Dorsolateral prefrontal cortex (tissue), 120 donors: ENCODE measurements at regions of chr6 and their contacts with region 1.

Region 1: GRCh38 chr6:119078376-119079282 is at the start of gene FAM184A:
- DNase-seq: peak; percentile 39 to 88 (median 72)
- H3K4me3 ChIP-seq: peak within 1 kb of the TSS; percentile 58 to 90 (median 80)
- H3K27ac ChIP-seq: peak within 1 kb of the TSS in 56 of 59 donors; percentile 8 to 91 (median 71)
- H3K27me3 ChIP-seq: no peaks in the 10 kb centered on the region
- CTCF ChIP-seq: peak in 39 of 56 donors; percentile 11 to 63 (median 36)
- total RNA-seq, gene FAM184A: 13.9 to 52.2 (median 26.9) TPM

Region 2: DNA sequence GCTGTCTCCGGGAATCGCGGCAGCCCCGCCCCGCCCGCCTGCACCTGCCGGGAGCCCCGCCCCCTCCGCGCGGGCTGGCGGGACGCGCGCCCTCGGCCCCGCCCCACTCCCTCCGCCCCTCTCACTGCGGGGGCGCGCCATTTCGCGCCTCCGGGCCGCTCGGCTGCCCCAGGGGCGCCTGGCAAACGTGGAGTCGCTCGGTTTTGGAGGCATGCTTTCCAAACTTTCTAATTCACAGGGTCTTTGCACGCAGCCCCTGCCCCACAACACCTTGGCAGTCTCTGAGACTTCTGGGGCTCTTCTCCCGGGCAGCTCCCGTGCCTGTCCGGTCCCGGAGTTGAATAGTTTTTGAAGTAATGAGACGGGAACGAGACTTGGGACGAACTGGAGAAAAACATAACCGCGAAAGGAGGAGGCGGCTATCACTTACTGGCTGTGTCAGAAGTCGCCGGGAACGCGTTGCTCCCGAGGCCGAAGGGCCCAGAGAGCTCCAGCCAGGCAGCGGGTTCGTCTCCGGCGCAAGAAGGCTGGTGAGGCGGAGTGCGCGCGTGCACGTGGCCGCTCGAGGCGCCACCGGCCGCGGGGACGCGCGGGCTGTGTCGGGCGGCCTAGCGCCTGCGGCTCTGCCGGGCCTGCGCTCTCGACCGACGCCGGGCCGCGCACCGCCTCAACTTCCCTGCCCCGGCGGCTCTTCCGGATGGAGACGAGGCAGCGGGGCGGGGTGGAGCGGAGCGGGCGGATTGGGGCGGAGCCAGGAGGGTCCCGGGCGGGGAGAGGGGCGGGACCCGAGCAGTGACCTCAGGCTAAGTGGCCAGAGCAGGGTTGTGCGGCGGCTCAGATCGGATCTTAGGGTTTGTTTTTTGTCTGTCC is 143.9 kb before region 1 on chr6 and contains the start of gene MCM9:
- intact Hi-C with region 1: loop called in 1 of 2 experiments (anchors 1 kb)
- DNase-seq: peak; percentile 59 to 91 (median 71)
- H3K4me3 ChIP-seq: peak within 1 kb of the TSS; percentile 51 to 93 (median 82)
- H3K27ac ChIP-seq: peak within 1 kb of the TSS; percentile 69 to 96 (median 90)
- H3K27me3 ChIP-seq: no peaks in the 10 kb centered on the region
- CTCF ChIP-seq: peak in 15 of 56 donors; percentile 4 to 39 (median 20)
- total RNA-seq, gene MCM9: 6.7 to 22.3 (median 13.8) TPM